ENCODE measurements at regions of chr11 and their contacts with region 1.

Region 1: DNA sequence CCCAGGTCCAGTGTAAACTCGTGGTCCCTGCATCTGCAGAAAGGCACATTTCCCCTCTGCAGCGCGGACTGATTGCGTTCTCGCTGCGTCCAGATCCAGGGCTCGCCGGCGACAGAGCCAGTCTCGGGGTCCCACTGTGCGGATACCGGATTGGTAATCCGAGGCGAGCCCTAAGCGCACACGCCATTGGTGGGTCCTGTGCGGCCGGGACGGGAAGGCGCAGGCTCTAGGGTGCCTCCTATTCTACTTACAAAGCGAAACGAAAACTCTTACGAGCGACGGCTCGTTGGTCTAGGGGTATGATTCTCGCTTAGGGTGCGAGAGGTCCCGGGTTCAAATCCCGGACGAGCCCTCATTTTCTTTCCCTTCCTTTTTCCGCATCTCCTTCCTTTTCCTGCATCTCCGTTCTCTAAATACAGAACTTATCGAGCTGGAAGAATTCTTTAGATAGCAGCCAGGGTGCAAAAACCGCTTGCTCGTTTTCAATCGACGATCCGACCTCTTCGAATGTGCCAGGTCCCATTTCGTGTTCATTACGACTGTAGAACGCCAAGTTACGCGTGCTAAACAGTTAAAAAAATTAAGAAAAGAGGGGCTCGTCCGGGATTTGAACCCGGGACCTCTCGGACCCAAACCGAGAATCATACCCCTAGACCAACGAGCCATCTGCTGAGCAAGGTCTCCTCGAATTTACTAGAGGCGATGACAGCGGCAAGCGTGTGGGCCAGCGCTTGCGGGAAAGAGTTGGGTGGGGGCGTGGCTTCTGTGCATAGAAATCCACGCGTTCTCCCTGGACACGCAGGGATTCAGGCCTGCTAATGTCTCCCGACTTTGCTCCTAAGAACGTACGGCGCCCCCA is 29.2 kb upstream of the WNT11 start:
- DNase-seq: peak; percentile 89 to 99
- H3K4me3 ChIP-seq: peak overlapping the region; percentile 58 to 98 (median 96)
- H3K27ac ChIP-seq: peak overlapping the region; percentile 59; the same call in 1 of the 2 replicates
- H3K4me1 ChIP-seq: peaks cover 0 to 8% (median 4%) of the 10 kb centered on the region in 4 experiments; a peak in 4 of 7 replicates
- H3K27me3 ChIP-seq: no peaks in the 10 kb centered on the region; a peak in 2 of 7 replicates
- CTCF ChIP-seq: no peak
- EP300 ChIP-seq: 0 out of 3 replicates have a peak, but pooled peaks of 1 of the 2 experiments have one; percentile 36
- POLR2A ChIP-seq: peak; percentile 91 to 93
- RAD21 ChIP-seq: no peak; a peak in 1 of 4 replicates

Region 2: DNA sequence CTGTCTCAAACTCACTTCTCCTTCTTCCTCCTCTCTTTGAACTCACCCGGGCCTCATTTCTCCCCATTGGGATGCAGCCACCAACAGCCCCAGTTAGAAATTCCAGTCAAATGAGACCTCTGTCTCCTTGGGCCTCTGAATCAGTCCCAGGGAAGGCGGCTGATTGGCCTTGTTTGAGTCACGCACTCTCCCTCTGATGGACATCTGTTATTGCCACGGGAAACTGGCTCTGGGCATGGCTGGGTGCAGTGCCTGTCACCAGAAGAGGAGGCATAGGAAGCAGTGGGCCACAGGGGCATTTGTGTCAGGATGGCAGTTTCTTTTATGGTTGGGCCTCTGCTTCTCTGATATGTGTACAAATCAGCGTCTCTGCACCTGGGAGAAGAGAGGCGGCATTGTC is 19.5 kb before region 1 on chr11:
- CTCF ChIA-PET with region 1: interaction called, 17 read pairs
- POLR2A ChIA-PET with region 1: interaction called, 39 read pairs
- DNase-seq: no peak
- H3K4me3 ChIP-seq: no peak overlapping the region
- H3K27ac ChIP-seq: no peak overlapping the region
- H3K4me1 ChIP-seq: peaks cover 3 to 22% (median 6%) of the 10 kb centered on the region in 4 experiments
- H3K27me3 ChIP-seq: peaks cover 12 to 26% (median 19%) of the 10 kb centered on the region in 4 experiments
- CTCF ChIP-seq: no peak
- EP300 ChIP-seq: no peak
- POLR2A ChIP-seq: no peak
- RAD21 ChIP-seq: no peak

Region 3: DNA sequence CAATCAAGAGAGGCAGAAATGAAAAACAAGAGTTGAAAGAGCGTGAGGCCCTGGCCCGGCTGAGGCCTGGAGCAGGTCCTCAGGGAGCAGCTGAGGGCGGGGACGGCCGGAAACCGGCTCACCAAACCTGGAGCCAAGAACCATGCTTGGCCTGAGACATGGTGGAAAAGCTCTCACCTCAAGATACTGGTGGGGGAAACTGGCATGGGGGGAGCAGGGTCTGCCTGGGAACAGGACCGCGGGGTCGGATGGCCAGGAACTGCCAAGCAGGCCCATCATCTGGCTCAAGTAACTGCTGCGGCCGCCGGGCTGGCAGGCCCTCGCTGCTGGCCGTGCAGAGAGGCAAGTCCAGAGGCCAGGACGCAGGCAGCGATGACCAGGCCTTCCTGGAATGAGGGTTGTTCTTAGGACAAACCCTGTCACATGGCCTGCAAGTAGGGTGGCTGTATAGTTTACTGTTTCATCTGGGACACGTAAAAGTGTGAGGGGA is 10.3 kb before region 1 on chr11:
- CTCF ChIA-PET with region 1: interaction called, 4 read pairs
- POLR2A ChIA-PET with region 1: interaction called, 17 read pairs
- DNase-seq: no peak
- H3K4me3 ChIP-seq: no peak overlapping the region
- H3K27ac ChIP-seq: no peak overlapping the region
- H3K4me1 ChIP-seq: no peaks in the 10 kb centered on the region
- H3K27me3 ChIP-seq: no peaks in the 10 kb centered on the region
- CTCF ChIP-seq: no peak
- EP300 ChIP-seq: no peak
- POLR2A ChIP-seq: no peak
- RAD21 ChIP-seq: no peak

Region 4: DNA sequence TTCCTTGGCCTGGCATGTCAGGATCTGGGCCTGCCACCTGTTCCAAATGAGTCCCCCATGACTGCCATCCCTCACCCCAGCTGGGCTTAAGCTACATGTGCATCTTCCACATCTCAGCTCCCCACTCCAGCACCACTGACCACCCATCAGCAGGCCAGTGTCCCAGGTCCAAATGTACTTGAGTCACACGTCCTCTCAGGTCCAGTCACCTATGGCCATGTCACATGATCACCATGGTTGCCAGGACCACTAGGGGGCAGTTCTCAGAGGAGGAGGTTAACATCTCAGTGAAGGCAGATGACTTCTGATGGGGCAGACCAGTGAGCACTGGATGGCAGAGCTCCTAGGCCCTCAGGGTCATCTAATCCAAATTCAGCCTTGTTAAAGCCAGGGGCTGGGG is 12.7 kb after region 1 on chr11:
- CTCF ChIA-PET with region 1: interaction called, 11 read pairs
- POLR2A ChIA-PET with region 1: interaction called, 38 read pairs
- DNase-seq: peak in 1 of 2 experiments; percentile 59
- H3K4me3 ChIP-seq: no peak overlapping the region
- H3K27ac ChIP-seq: no peak overlapping the region
- H3K4me1 ChIP-seq: peaks cover 0 to 9% (median 7%) of the 10 kb centered on the region in 4 experiments; a peak in 6 of 7 replicates
- H3K27me3 ChIP-seq: peaks cover 2 to 8% (median 6%) of the 10 kb centered on the region in 4 experiments; a peak in 6 of 7 replicates
- CTCF ChIP-seq: peak; percentile 54 to 74 (median 72)
- EP300 ChIP-seq: no peak
- POLR2A ChIP-seq: no peak
- RAD21 ChIP-seq: peak; percentile 35 to 57; a peak in 3 of 4 replicates

Region 5: GRCh38 chr11:76279646-76280045 is 44.2 kb after region 1 on chr11:
- CTCF ChIA-PET with region 1: no interaction called
- POLR2A ChIA-PET with region 1: interaction called, 10 read pairs
- DNase-seq: peak in 1 of 2 experiments; percentile 19
- H3K4me3 ChIP-seq: no peak overlapping the region
- H3K27ac ChIP-seq: no peak overlapping the region
- H3K4me1 ChIP-seq: peaks cover 5 to 33% (median 13%) of the 10 kb centered on the region in 4 experiments
- H3K27me3 ChIP-seq: peaks cover 0 to 7% (median 2%) of the 10 kb centered on the region in 4 experiments; a peak in 2 of 7 replicates
- CTCF ChIP-seq: no peak
- EP300 ChIP-seq: peak; percentile 17 to 27; a peak in 2 of 3 replicates
- POLR2A ChIP-seq: no peak
- RAD21 ChIP-seq: no peak

Measured in H1 (cell line).